ENCODE measurements at regions of chr20 and their contacts with region 1.

Region 1: DNA sequence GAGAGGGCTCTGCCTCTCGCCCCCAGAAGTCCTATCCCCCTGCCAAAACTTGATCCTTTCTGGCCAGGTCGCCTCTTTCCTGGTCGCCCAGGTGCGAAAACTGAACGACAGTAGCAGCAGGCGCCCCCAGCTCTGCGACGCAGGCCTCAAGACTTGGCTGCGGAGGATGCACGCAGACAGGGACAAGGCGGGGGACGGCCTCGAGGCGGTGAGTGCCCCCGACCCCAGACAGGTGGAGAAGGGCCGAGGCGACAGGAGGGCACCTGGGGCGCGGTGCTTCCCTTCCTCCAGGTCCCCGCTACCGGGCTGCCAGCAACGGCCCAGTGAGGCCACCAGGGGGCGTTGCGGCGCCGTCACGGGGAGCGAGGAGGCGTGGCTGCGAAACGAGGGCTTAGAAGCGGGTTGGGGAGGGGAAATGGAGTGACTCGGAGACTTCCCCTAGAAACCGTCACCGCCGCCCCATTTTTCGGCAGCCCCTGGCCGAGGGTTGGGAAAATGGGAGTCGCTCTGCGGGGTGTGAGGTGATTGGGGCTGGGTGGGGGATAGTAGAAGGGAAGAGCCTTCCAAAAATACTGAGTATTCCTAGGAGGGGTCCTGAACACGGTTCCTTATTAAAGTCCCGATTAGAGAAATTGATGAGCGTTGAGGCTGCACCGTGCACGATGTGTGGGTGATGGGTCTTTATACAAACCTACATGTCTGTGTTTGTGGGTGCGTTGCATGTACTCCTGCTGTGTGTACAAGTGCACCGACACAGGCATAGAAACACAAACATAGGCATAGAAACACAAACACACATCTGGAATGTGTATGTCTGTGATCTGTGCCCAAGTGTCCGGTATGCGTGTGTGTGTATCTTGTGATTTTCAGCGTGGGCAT is 44.6 kb downstream of the ARHGAP40 start:
- ATAC-seq: peak; percentile 85 to 95 (median 89)
- H3K4me3 ChIP-seq: peak overlapping the region; percentile 5 to 32 (median 26)
- H3K27ac ChIP-seq: no peak overlapping the region
- H3K4me1 ChIP-seq: peaks cover 2 to 3% of the 10 kb centered on the region in 2 donors

Region 2: DNA sequence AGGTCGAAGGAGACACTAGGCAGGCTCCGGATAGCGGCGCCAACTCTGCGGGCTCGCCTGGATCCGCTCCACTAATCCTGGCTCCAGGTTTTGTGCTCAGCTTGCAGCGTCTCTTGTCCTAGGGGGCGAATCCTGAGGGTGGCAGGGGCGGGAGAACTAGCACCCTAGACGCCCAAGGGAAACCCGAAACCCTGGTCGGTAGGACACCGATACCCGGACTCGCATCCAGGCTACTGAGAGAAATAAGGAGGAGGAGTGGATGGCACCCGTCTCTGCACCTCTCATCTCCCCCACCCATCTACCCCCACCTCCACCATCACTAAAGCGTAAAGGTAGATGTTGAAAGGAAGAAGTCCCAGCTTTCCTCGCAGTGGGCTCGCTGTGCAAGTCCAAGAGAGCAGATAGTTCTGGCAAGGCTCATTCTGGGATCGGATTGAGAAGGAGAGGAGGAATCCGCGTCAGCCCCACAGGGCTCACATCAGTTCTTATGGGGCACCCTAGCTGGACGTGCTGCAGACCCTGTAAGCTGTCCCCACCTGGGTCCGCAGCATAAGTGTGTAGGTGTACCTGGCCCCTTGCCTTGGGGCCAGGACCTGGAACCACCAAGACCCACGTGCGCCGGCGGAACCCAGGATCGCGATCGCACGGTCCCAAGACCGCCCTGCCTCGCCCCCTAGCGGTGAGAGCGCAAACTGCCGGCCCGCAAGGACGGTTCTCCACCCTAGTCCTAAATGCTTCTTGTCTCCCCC is 84.9 kb after region 1 on chr20:
- in situ Hi-C with region 1: loop called in 4 of 9 experiments (anchors 10 to 25 kb)
- ATAC-seq: peak; percentile 63 to 93 (median 79)
- H3K4me3 ChIP-seq: peak overlapping the region; percentile 6 to 23 (median 15)
- H3K27ac ChIP-seq: no peak overlapping the region
- H3K4me1 ChIP-seq: peaks cover 9 to 12% of the 10 kb centered on the region in 2 donors

Region 3: GRCh38 chr20:38748097-38748860 is 102.1 kb after region 1 on chr20 and contains the start of gene ACTR5:
- in situ Hi-C with region 1: loop called in 6 of 9 experiments (anchors 10 to 25 kb)
- ATAC-seq: peak; percentile 88 to 93 (median 90)
- H3K4me3 ChIP-seq: peak within 1 kb of the TSS; percentile 69 to 100 (median 80)
- H3K27ac ChIP-seq: peak within 1 kb of the TSS; percentile 72 to 87
- H3K4me1 ChIP-seq: peaks cover 0 to 12% of the 10 kb centered on the region in 2 donors
- total RNA-seq, gene ACTR5: 4.3 to 8.0 (median 5.3) TPM

Region 4: DNA sequence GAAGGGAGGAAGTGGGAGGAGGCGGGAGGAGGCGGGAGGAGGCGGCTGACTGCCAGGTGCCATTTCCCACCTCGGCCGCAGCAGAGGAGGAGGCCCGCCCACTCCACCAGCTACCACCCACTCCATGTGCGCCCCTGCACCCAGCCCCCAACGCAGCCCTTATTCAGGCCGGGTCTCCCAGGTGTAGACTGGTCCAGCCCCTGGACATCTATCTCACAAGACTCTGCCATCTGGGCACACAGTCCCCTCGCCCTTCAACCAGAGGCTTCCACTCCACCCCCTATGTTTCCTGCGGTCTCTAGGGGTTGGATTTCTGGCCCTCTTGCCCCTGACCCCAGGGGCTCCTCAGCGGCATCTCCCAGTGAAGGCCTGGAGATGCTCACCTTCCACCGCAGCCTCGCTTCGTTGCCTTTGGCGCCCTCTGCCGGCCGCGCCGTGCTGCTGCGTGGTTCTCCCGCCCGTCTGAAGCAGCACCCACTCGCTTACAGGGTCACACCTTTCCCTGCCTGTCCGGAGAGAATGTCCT is 247.4 kb after region 1 on chr20:
- in situ Hi-C with region 1: loop called in 1 of 9 experiments (anchors 10 kb)
- ATAC-seq: peak; percentile 81 to 94 (median 84)
- H3K4me3 ChIP-seq: no peak overlapping the region
- H3K27ac ChIP-seq: no peak overlapping the region
- H3K4me1 ChIP-seq: peaks cover 15 to 28% of the 10 kb centered on the region in 2 donors

Measured in motor neuron (in vitro differentiated cells).